B cell (primary cell): ENCODE measurements at regions of chr14 and their contacts with region 1.

Region 1: DNA sequence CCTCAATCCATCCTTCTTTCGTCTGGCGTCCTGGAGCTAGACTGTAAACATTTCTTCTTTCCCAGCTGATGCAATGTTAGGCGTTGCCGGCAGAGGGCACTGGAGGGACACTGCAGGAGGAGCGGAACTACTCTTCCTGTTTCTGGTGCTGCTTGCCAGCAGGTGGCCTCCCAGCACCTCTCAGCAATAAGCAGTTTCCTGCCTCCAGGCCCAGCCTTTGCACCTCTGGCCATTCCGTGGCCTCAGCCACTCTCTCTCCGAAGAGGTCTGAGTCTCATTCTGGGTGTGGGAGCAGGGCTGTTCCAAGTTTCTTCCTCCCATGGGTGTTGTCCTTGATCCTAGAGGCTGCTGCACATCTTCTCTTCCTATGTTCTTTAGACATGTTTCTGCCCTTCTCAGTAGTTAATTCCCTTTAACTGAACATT is 7.5 kb upstream of the ASPG start:
- DNase-seq: peak; percentile 88
- ATAC-seq: peak; percentile 98
- H3K4me3 ChIP-seq: no peak overlapping the region
- H3K4me3 Mint-ChIP-seq: no peak overlapping the region
- H3K27ac ChIP-seq: no peak overlapping the region
- H3K27ac Mint-ChIP-seq: no peak overlapping the region
- H3K4me1 ChIP-seq: peaks cover 4 to 8% of the 10 kb centered on the region in 2 donors
- H3K4me1 Mint-ChIP-seq: peaks cover 6% of the 10 kb centered on the region
- H3K27me3 ChIP-seq: no peaks in the 10 kb centered on the region
- H3K27me3 Mint-ChIP-seq: peaks cover 17% of the 10 kb centered on the region
- CTCF ChIP-seq: peak; percentile 100

Region 2: GRCh38 chr14:104094709-104095438 is 16.8 kb after region 1 on chr14:
- CTCF ChIA-PET with region 1: interaction called, 6 read pairs
- POLR2A ChIA-PET with region 1: no interaction called
- intact Hi-C with region 1: loop called (anchors 1 kb)
- DNase-seq: peak; percentile 71
- ATAC-seq: no peak
- H3K4me3 ChIP-seq: no peak overlapping the region
- H3K4me3 Mint-ChIP-seq: no peak overlapping the region
- H3K27ac ChIP-seq: no peak overlapping the region
- H3K27ac Mint-ChIP-seq: no peak overlapping the region
- H3K4me1 ChIP-seq: peaks cover 0 to 6% of the 10 kb centered on the region in 2 donors
- H3K4me1 Mint-ChIP-seq: peaks cover 7% of the 10 kb centered on the region
- H3K27me3 ChIP-seq: peaks cover 0 to 5% (median 0%) of the 10 kb centered on the region in 4 experiments
- H3K27me3 Mint-ChIP-seq: peaks cover 3% of the 10 kb centered on the region
- CTCF ChIP-seq: peak; percentile 92

Region 3: DNA sequence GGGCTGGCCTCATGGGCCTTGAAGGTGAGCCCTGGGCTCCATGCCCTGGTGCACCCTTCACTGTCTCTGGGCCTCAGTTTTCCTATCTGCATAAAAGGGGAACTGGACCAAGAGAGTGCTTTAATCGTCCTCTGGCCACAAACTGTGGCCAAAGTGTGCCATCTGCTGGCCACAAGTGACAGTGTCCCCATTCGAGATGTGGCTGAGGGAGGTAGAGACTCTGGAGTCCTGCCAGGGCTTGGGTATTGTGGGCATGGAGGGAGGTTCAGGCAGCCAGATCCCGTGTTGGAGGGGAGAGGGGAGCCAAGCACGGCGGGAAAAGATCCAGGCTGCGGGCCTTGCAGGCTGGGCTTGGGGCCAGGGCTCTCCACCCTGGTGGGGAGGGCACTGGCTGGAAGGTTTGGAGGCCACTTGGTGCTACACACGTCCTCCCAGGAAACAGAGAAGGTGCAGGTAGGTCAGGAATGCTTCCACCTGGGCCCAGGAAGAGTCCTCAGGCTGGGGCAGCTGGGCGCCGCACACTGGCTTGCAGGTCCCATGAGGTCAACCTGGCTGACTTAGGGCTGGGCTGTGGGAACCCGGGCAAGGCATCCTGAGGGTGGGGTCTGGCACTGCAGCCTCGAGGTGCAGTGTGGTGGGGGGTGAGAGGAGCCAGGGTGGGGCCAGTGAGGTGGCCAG is 53.1 kb after region 1 on chr14:
- CTCF ChIA-PET with region 1: interaction called, 5 read pairs
- POLR2A ChIA-PET with region 1: no interaction called
- intact Hi-C with region 1: loop called (anchors 1 kb)
- DNase-seq: no peak
- ATAC-seq: no peak
- H3K4me3 ChIP-seq: no peak overlapping the region
- H3K4me3 Mint-ChIP-seq: no peak overlapping the region
- H3K27ac ChIP-seq: no peak overlapping the region
- H3K27ac Mint-ChIP-seq: no peak overlapping the region
- H3K4me1 ChIP-seq: peaks cover 10% of the 10 kb centered on the region in 2 donors
- H3K4me1 Mint-ChIP-seq: peaks cover 2% of the 10 kb centered on the region
- H3K27me3 ChIP-seq: peaks cover 0 to 52% (median 12%) of the 10 kb centered on the region in 4 experiments
- H3K27me3 Mint-ChIP-seq: peaks cover 44% of the 10 kb centered on the region
- CTCF ChIP-seq: no peak

Region 4: DNA sequence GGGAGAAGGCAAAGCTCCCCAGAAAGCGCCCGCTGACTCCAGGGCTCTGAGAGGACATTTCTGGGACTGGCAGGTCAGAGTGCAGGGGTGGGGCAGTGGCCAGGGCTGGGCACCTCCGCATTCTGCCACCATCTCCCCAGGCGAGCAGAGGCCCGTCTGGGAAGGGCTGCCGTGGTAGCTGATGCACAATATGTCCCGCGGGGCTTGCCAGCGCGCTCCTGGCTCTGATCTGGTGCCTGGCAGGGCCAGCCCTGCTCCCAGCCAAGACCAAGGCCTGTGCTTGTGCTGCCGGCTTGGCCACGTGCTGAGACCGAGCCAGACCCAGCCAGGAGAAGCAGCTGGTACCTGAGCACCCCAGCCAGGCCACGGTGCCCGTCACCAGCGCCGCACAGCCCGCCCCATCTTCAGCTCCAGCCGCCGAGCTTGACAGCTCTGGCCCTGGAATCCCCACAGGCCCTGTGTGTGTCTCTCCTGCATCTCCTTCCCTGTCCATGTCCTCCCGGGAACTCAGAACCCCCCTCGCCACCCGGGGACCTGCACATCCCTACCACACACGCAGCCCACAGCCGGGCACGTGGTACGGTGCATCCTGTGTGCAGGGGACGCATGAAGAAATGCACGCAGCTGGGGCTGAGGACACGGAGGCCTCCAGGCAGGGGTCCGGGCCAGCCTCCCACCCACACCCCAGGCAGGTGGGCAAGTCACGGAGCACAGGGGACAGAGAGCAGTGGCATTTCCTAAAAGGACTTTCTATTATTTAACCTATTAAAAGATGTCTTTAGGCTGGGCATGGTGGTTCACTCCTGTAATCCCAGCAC is 433.0 kb after region 1 on chr14:
- CTCF ChIA-PET with region 1: no interaction called
- POLR2A ChIA-PET with region 1: no interaction called
- intact Hi-C with region 1: no loop called
- DNase-seq: no peak
- ATAC-seq: no peak
- H3K4me3 ChIP-seq: no peak overlapping the region
- H3K4me3 Mint-ChIP-seq: no peak overlapping the region
- H3K27ac ChIP-seq: no peak overlapping the region
- H3K27ac Mint-ChIP-seq: no peak overlapping the region
- H3K4me1 ChIP-seq: no peaks in the 10 kb centered on the region
- H3K4me1 Mint-ChIP-seq: no peaks in the 10 kb centered on the region
- H3K27me3 ChIP-seq: peaks cover 0 to 14% (median 0%) of the 10 kb centered on the region in 4 experiments
- H3K27me3 Mint-ChIP-seq: peaks cover 18% of the 10 kb centered on the region
- CTCF ChIP-seq: no peak

Region 5: GRCh38 chr14:104563742-104564615 is 485.9 kb after region 1 on chr14:
- CTCF ChIA-PET with region 1: interaction called, 13 read pairs
- POLR2A ChIA-PET with region 1: no interaction called
- intact Hi-C with region 1: no loop called
- DNase-seq: peak; percentile 68
- ATAC-seq: peak; percentile 62
- H3K4me3 ChIP-seq: no peak overlapping the region
- H3K4me3 Mint-ChIP-seq: peak overlapping the region; percentile 34
- H3K27ac ChIP-seq: no peak overlapping the region
- H3K27ac Mint-ChIP-seq: no peak overlapping the region
- H3K4me1 ChIP-seq: peaks cover 11 to 12% of the 10 kb centered on the region in 2 donors
- H3K4me1 Mint-ChIP-seq: peaks cover 7% of the 10 kb centered on the region
- H3K27me3 ChIP-seq: peaks cover 0 to 32% (median 10%) of the 10 kb centered on the region in 4 experiments
- H3K27me3 Mint-ChIP-seq: peaks cover 27% of the 10 kb centered on the region
- CTCF ChIP-seq: peak; percentile 73

Region 6: GRCh38 chr14:104639889-104640548 is 562.0 kb after region 1 on chr14:
- CTCF ChIA-PET with region 1: interaction called, 10 read pairs
- POLR2A ChIA-PET with region 1: no interaction called
- intact Hi-C with region 1: no loop called
- DNase-seq: peak; percentile 77
- ATAC-seq: peak; percentile 90
- H3K4me3 ChIP-seq: no peak overlapping the region
- H3K4me3 Mint-ChIP-seq: no peak overlapping the region
- H3K27ac ChIP-seq: no peak overlapping the region
- H3K27ac Mint-ChIP-seq: no peak overlapping the region
- H3K4me1 ChIP-seq: peaks cover 16 to 18% of the 10 kb centered on the region in 2 donors
- H3K4me1 Mint-ChIP-seq: peaks cover 7% of the 10 kb centered on the region
- H3K27me3 ChIP-seq: peaks cover 0 to 13% (median 0%) of the 10 kb centered on the region in 4 experiments
- H3K27me3 Mint-ChIP-seq: peaks cover 9% of the 10 kb centered on the region
- CTCF ChIP-seq: peak; percentile 93

Region 7: GRCh38 chr14:104926619-104927431 is 848.8 kb after region 1 on chr14:
- CTCF ChIA-PET with region 1: no interaction called
- POLR2A ChIA-PET with region 1: no interaction called
- intact Hi-C with region 1: no loop called
- DNase-seq: peak; percentile 89
- ATAC-seq: peak; percentile 61
- H3K4me3 ChIP-seq: peak overlapping the region; percentile 8 to 74 (median 56)
- H3K4me3 Mint-ChIP-seq: peak overlapping the region; percentile 86
- H3K27ac ChIP-seq: peak overlapping the region; percentile 81 to 84
- H3K27ac Mint-ChIP-seq: peak overlapping the region; percentile 90
- H3K4me1 ChIP-seq: peaks cover 52 to 60% of the 10 kb centered on the region in 2 donors
- H3K4me1 Mint-ChIP-seq: peaks cover 63% of the 10 kb centered on the region
- H3K27me3 ChIP-seq: no peaks in the 10 kb centered on the region
- H3K27me3 Mint-ChIP-seq: no peaks in the 10 kb centered on the region
- CTCF ChIP-seq: no peak